MCF 10A (cell line): ENCODE measurements at regions of chr12 and their contacts with region 1.

Region 1: GRCh38 chr12:79151956-79152355 is 287.4 kb downstream of the SYT1 start:
- DNase-seq: no peak
- H3K4me3 Mint-ChIP-seq: no peak overlapping the region
- H3K27ac Mint-ChIP-seq: no peak overlapping the region
- H3K4me1 Mint-ChIP-seq: peaks cover 4% of the 10 kb centered on the region
- H3K27me3 Mint-ChIP-seq: no peaks in the 10 kb centered on the region
- CTCF ChIP-seq: no peak

Region 2: GRCh38 chr12:79162949-79163348 is 11.0 kb after region 1 on chr12:
- CTCF ChIA-PET with region 1: no interaction called
- POLR2A ChIA-PET with region 1: no interaction called
- intact Hi-C with region 1: no loop called
- DNase-seq: no peak
- H3K4me3 Mint-ChIP-seq: no peak overlapping the region
- H3K27ac Mint-ChIP-seq: no peak overlapping the region
- H3K4me1 Mint-ChIP-seq: no peaks in the 10 kb centered on the region
- H3K27me3 Mint-ChIP-seq: no peaks in the 10 kb centered on the region
- CTCF ChIP-seq: no peak

Region 3: GRCh38 chr12:79200218-79200617 is 48.3 kb after region 1 on chr12:
- CTCF ChIA-PET with region 1: no interaction called
- POLR2A ChIA-PET with region 1: no interaction called
- intact Hi-C with region 1: loop called (anchors 2 kb)
- DNase-seq: no peak
- H3K4me3 Mint-ChIP-seq: no peak overlapping the region
- H3K27ac Mint-ChIP-seq: no peak overlapping the region
- H3K4me1 Mint-ChIP-seq: no peaks in the 10 kb centered on the region
- H3K27me3 Mint-ChIP-seq: no peaks in the 10 kb centered on the region
- CTCF ChIP-seq: no peak